Caco-2 (cell line): ENCODE measurements at regions of chr5 and their contacts with region 1.

Region 1: GRCh38 chr5:63053019-63053638 is 474.5 kb downstream of the LRRC70 start:
- DNase-seq: no peak
- H3K4me3 ChIP-seq: no peak overlapping the region
- H3K4me3 Mint-ChIP-seq: no peak overlapping the region
- H3K27ac Mint-ChIP-seq: peak overlapping the region; percentile 45
- H3K4me1 ChIP-seq: peaks cover 34% of the 10 kb centered on the region
- H3K4me1 Mint-ChIP-seq: peaks cover 15% of the 10 kb centered on the region
- H3K27me3 ChIP-seq: no peaks in the 10 kb centered on the region
- H3K27me3 Mint-ChIP-seq: no peaks in the 10 kb centered on the region
- CTCF ChIP-seq: no peak

Region 2: DNA sequence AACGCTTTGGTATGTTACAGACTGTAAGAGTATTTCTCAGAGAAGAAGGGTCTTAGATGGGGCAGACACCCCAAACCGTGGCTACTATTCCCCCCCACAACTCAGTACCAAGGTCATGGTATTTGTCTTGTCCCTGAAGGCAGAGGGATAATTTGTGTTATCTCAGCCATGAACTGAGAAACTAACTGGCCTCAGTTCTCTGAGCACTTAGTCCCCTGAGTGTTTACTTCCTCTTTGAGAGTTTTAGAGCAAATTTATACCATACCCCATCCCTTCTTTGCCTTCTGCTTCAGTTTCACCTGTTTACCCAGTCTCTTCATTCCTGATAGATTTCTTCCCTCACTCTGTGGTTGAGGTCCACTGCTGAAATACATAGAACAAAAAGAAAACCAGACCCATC is 290.6 kb before region 1 on chr5:
- CTCF ChIA-PET with region 1: no interaction called
- POLR2A ChIA-PET with region 1: no interaction called
- intact Hi-C with region 1: no loop called
- DNase-seq: no peak
- H3K4me3 ChIP-seq: no peak overlapping the region
- H3K4me3 Mint-ChIP-seq: no peak overlapping the region
- H3K27ac Mint-ChIP-seq: no peak overlapping the region
- H3K4me1 ChIP-seq: no peaks in the 10 kb centered on the region
- H3K4me1 Mint-ChIP-seq: no peaks in the 10 kb centered on the region
- H3K27me3 ChIP-seq: no peaks in the 10 kb centered on the region
- H3K27me3 Mint-ChIP-seq: no peaks in the 10 kb centered on the region
- CTCF ChIP-seq: no peak

Region 3: GRCh38 chr5:62886603-62887315 is 166.4 kb before region 1 on chr5:
- CTCF ChIA-PET with region 1: no interaction called
- POLR2A ChIA-PET with region 1: no interaction called
- intact Hi-C with region 1: loop called (anchors 1 kb)
- DNase-seq: peak; percentile 80 to 84
- H3K4me3 ChIP-seq: no peak overlapping the region
- H3K4me3 Mint-ChIP-seq: peak overlapping the region; percentile 58
- H3K27ac Mint-ChIP-seq: peak overlapping the region; percentile 76
- H3K4me1 ChIP-seq: peaks cover 53% of the 10 kb centered on the region
- H3K4me1 Mint-ChIP-seq: peaks cover 29% of the 10 kb centered on the region
- H3K27me3 ChIP-seq: no peaks in the 10 kb centered on the region
- H3K27me3 Mint-ChIP-seq: no peaks in the 10 kb centered on the region
- CTCF ChIP-seq: no peak

Region 4: GRCh38 chr5:63097286-63097685 is 44.2 kb after region 1 on chr5:
- CTCF ChIA-PET with region 1: no interaction called
- POLR2A ChIA-PET with region 1: no interaction called
- intact Hi-C with region 1: loop called (anchors 1 kb)
- DNase-seq: peak in 1 of 2 experiments; percentile 9
- H3K4me3 ChIP-seq: no peak overlapping the region
- H3K4me3 Mint-ChIP-seq: no peak overlapping the region
- H3K27ac Mint-ChIP-seq: peak overlapping the region; percentile 50
- H3K4me1 ChIP-seq: peaks cover 20% of the 10 kb centered on the region; the same call in 1 of the 2 replicates
- H3K4me1 Mint-ChIP-seq: peaks cover 11% of the 10 kb centered on the region
- H3K27me3 ChIP-seq: no peaks in the 10 kb centered on the region
- H3K27me3 Mint-ChIP-seq: no peaks in the 10 kb centered on the region
- CTCF ChIP-seq: no peak

Region 5: DNA sequence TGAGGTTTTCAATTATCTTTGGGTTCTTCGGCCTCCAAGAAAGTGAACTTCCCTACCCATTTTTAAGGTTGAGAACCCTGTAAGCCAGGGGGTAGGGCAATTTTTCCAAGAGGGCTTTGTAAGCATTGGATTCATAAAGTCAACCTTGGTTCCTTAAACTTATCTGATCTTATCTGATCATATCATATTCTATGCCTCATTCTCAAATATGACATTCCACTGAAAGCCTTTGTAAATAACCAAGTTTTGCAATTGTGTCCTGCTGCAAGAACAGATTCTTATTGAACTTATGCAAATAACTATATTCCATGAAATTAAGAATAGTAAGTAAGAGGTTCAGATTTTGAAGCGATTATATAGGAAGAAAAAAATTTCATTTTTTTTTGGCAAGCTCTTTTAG is 175.0 kb after region 1 on chr5:
- CTCF ChIA-PET with region 1: no interaction called
- POLR2A ChIA-PET with region 1: no interaction called
- intact Hi-C with region 1: loop called (anchors 1 kb)
- DNase-seq: peak in 1 of 2 experiments; percentile 34
- H3K4me3 ChIP-seq: no peak overlapping the region
- H3K4me3 Mint-ChIP-seq: no peak overlapping the region
- H3K27ac Mint-ChIP-seq: no peak overlapping the region
- H3K4me1 ChIP-seq: peaks cover 22% of the 10 kb centered on the region
- H3K4me1 Mint-ChIP-seq: peaks cover 14% of the 10 kb centered on the region
- H3K27me3 ChIP-seq: no peaks in the 10 kb centered on the region
- H3K27me3 Mint-ChIP-seq: no peaks in the 10 kb centered on the region
- CTCF ChIP-seq: no peak